ENCODE measurements at regions of chr5 and their contacts with region 1.

Region 1: DNA sequence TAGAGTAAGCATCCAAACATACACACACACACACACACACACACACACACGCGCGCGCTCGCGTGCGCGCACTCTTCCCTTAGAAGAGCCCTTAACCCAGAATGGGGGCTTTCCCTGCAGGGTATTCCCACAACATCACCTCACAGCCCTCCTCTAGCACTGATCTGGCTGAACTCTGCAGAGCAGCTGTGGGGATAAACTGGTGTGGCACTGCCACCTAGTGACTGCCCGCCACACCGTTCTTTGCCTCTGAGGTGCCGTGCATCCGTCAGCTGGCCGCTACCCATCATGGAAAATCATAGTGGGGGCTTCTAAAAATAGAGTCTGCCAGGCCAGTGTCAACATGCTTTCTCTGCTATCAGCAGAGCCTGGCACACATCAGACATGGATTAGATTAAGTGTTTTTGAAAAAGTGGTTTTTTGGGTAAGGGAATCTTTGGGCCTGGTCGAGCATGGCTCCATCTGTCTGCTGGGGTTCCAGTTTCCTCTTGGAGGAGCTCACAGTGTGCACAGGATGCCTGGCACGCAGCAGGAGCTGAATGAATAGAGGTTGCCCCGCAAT is 88.1 kb downstream of the KCNN2 start:
- DNase-seq: peak; percentile 66
- H3K4me3 ChIP-seq: no peak overlapping the region
- H3K27ac ChIP-seq: no peak overlapping the region
- H3K4me1 ChIP-seq: no peaks in the 10 kb centered on the region
- H3K27me3 ChIP-seq: no peaks in the 10 kb centered on the region
- CTCF ChIP-seq: peak; percentile 43 to 82 (median 72)
- POLR2A ChIP-seq: no peak

Region 2: GRCh38 chr5:113612060-113612496 is 837.9 kb before region 1 on chr5:
- intact Hi-C with region 1: loop called (anchors 10 kb)
- DNase-seq: no peak
- H3K4me3 ChIP-seq: no peak overlapping the region
- H3K27ac ChIP-seq: no peak overlapping the region
- H3K4me1 ChIP-seq: no peaks in the 10 kb centered on the region
- H3K27me3 ChIP-seq: no peaks in the 10 kb centered on the region
- CTCF ChIP-seq: peak in 3 of 4 experiments; percentile 60 to 70 (median 68)
- POLR2A ChIP-seq: no peak

Region 3: GRCh38 chr5:113678924-113679575 is 770.9 kb before region 1 on chr5:
- intact Hi-C with region 1: loop called (anchors 5 kb)
- DNase-seq: no peak
- H3K4me3 ChIP-seq: no peak overlapping the region
- H3K27ac ChIP-seq: no peak overlapping the region
- H3K4me1 ChIP-seq: no peaks in the 10 kb centered on the region
- H3K27me3 ChIP-seq: no peaks in the 10 kb centered on the region
- CTCF ChIP-seq: peak; percentile 33 to 67 (median 63)
- POLR2A ChIP-seq: no peak

Region 4: GRCh38 chr5:113806250-113806649 is 643.7 kb before region 1 on chr5:
- intact Hi-C with region 1: loop called (anchors 5 kb)
- DNase-seq: no peak
- H3K4me3 ChIP-seq: no peak overlapping the region
- H3K27ac ChIP-seq: peak overlapping the region in 1 of 2 donors; percentile 8
- H3K4me1 ChIP-seq: no peaks in the 10 kb centered on the region
- H3K27me3 ChIP-seq: no peaks in the 10 kb centered on the region
- CTCF ChIP-seq: peak in 3 of 4 experiments; percentile 18 to 50 (median 48)
- POLR2A ChIP-seq: no peak

Region 5: DNA sequence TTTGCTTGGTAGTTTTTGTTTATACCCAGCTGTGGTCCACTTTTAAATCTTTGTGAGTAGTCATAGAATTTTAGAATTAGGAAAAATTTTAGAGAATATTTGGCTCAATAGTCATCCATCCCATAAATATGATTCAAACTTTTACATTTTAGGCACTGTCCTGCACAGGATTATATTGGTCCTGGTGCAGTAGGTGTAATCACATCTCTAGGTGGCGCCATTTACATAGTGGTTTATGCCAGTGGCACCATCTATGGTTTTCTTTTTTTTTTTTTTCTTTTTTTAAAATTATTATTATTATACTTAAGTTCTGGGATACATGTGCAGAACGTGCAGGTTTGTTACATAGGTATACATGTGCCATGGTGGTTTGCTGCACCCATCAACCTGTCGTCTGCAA is 348.8 kb before region 1 on chr5:
- intact Hi-C with region 1: loop called (anchors 10 kb)
- DNase-seq: peak; percentile 47
- H3K4me3 ChIP-seq: no peak overlapping the region
- H3K27ac ChIP-seq: no peak overlapping the region
- H3K4me1 ChIP-seq: no peaks in the 10 kb centered on the region
- H3K27me3 ChIP-seq: no peaks in the 10 kb centered on the region
- CTCF ChIP-seq: peak in 3 of 4 experiments; percentile 11 to 38 (median 35)
- POLR2A ChIP-seq: no peak

Region 6: DNA sequence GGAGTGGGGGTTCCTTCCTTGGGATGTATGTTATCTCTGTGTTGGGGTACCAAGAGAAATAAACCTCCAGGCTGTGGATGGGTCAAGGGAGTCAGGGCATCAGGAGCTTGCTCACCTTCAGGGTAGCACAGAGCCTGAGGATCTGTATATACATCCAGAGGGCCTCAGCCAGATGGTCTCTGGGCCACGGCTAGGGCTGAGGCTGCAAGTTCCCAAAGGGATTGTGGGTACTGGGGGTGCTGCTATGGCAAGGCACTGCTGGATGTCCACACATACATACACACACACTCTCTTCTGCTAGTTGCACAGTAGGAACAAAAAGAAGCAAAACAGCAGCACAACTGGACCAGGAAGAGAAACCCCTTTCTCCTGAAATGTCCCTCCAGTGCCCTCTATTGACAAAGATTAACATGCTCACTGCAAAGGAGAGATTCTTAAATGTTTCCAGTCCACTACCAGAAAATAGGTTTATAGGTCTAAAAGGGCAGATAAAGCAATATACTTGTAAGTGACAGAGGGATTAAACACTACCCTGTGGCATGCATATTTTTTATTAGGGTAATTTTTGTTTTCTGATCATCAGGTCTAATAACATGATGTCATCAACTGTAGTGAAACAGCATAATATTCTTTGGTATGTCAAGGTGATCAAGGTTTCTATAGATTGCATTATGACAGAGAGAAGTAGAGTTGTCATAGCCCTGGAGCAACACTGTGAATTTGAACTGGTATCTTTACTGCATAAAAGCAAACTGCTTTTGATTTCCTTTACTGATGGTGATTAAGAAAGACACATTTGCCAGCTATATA is 144.3 kb before region 1 on chr5:
- intact Hi-C with region 1: loop called (anchors 5 kb)
- DNase-seq: no peak
- H3K4me3 ChIP-seq: no peak overlapping the region
- H3K27ac ChIP-seq: no peak overlapping the region
- H3K4me1 ChIP-seq: no peaks in the 10 kb centered on the region
- H3K27me3 ChIP-seq: no peaks in the 10 kb centered on the region
- CTCF ChIP-seq: peak in 3 of 4 experiments; percentile 15 to 22 (median 21)
- POLR2A ChIP-seq: no peak

Measured in prostate gland (tissue), 2 donors.